Activated T-helper 1 cell treated with anti-CD3 and anti-CD28 coated beads, Interleukin-12 subunit alpha, Interleukin-12 subunit beta, Interleukin-2, Interleukin-4 antibody, amounts not matched to agents 30 ng/mL and 10 ng/mL and 1 ng/mL, durations not matched to agents 14 hours and 24 hours and 36 hours (primary cell): ENCODE measurements at regions of chr2 and their contacts with region 1.

Region 1: DNA sequence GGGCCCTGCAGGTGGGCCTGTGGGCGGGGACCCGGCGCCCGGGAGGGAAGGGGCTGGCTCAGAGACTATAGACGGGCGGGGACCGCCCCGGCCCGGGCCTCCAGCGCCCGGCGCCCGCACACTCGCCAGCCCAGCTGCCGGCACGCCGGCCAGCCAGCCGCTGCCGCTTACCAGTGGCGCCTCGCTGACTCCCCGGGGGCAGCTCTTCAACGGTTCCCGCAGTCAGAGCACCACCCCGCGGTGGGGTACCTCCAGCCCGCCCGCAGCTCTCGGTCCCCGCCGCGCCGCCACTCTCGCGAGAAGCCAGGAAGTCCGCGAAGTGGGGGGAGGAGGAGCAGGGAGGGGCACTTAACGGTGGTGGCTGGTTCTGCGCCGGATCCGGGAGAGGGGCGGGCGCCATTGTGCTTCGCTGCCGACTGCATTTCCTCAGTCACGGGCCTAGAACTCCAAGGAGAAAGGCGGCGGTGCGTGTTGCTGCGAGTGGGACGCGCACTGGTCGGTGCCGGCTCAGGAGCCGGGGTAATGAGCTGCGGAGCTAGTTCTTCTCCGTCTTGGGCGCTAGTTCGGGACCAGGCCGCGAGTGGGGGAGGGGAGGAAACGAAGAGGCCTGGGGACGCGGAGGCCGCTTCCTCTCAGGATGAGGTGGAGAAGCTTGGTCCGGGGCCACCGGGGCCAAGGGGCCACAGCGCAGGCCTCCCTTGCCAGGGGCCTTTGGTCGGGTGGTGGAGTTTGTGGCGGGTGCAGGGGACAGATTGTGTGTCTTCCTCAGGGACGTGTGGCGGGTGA is at the start of gene MARCHF7:
- DNase-seq: peak; percentile 96
- H3K4me3 Mint-ChIP-seq: peak within 1 kb of the TSS; percentile 98
- H3K27ac Mint-ChIP-seq: peak within 1 kb of the TSS; percentile 98
- H3K4me1 Mint-ChIP-seq: peaks cover 44% of the 10 kb centered on the region
- H3K27me3 Mint-ChIP-seq: no peaks in the 10 kb centered on the region
- total RNA-seq, gene MARCHF7: 76.5 and 80.3 TPM in 2 replicates

Region 2: DNA sequence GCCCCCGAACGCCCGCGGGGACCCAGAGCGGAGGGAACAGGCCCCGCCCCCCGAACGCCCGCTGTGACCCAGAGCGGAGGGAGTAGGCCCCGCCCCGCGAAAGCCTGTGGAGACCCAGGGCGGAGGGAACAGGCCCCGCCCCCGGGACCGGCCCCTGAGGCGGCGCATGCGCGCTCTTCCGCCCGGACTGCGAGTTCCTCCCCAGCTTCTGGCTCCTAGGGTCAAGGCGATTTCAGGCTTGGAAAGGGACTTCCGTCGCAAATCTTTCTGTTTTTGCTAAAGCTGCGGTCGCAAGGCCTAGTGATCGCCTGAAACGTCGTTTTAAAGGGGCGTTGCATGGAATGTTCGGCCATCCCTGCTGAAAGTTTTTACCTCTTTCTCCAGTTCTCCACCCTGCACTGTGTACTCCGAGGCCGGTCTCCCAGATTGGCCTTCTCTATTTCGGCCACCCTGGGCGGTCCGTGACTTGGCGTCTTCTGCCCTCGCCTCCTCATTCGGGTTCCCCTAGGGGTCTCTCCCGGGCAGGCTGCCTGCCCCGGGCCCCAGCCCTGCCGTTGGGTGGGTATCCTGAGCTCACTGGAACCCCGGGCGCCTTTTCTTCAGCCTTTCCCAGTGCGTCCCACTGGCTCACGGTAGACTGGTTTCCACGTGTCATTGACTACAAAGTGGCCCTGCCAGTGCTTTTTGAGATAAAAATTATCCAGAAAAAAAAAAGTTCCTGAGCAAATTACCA is 425.5 kb before region 1 on chr2:
- intact Hi-C with region 1: loop called (anchors 1 kb)
- DNase-seq: peak; percentile 95
- H3K4me3 Mint-ChIP-seq: peak overlapping the region; percentile 84
- H3K27ac Mint-ChIP-seq: peak overlapping the region; percentile 76
- H3K4me1 Mint-ChIP-seq: peaks cover 28% of the 10 kb centered on the region
- H3K27me3 Mint-ChIP-seq: no peaks in the 10 kb centered on the region

Region 3: DNA sequence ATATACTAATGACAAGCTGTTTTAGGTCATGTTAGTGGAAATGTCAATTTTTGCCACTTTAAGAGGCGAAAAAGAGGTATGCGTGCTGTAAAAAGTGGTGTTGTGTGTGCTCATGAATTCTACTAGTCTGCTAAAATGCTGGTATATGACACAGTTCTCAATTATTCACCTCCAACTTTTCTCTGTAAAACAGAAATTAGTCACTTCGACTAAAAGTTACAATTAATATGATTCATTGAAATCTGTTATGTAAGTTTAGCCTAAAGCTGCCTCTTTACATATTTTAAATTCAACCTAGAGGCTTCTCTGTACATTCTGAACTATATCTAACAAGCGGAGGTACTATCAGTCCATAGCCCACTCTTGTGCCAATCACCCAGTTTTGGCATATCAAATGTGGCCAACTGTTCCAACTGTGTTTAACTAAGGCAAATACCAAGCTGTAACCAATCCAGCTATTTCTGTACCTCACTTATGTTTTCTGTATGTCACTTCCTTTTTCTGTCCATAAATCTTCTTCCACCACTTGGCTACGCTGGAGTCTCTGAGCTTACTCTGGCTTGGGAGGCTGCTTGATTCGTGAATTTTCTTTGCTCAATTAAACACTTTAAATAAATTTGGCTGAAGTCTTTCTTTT is 116.8 kb before region 1 on chr2:
- intact Hi-C with region 1: no loop called
- DNase-seq: no peak
- H3K4me3 Mint-ChIP-seq: no peak overlapping the region
- H3K27ac Mint-ChIP-seq: no peak overlapping the region
- H3K4me1 Mint-ChIP-seq: no peaks in the 10 kb centered on the region
- H3K27me3 Mint-ChIP-seq: no peaks in the 10 kb centered on the region

Region 4: GRCh38 chr2:159615140-159615951 is 97.0 kb before region 1 on chr2:
- intact Hi-C with region 1: loop called (anchors 1 kb)
- DNase-seq: peak; percentile 2
- H3K4me3 Mint-ChIP-seq: peak overlapping the region; percentile 83
- H3K27ac Mint-ChIP-seq: peak overlapping the region; percentile 21
- H3K4me1 Mint-ChIP-seq: peaks cover 18% of the 10 kb centered on the region
- H3K27me3 Mint-ChIP-seq: peaks cover 32% of the 10 kb centered on the region

Region 5: GRCh38 chr2:159671047-159671446 is 41.3 kb before region 1 on chr2:
- intact Hi-C with region 1: no loop called
- DNase-seq: no peak
- H3K4me3 Mint-ChIP-seq: no peak overlapping the region
- H3K27ac Mint-ChIP-seq: no peak overlapping the region
- H3K4me1 Mint-ChIP-seq: no peaks in the 10 kb centered on the region
- H3K27me3 Mint-ChIP-seq: peaks cover 2% of the 10 kb centered on the region

Region 6: DNA sequence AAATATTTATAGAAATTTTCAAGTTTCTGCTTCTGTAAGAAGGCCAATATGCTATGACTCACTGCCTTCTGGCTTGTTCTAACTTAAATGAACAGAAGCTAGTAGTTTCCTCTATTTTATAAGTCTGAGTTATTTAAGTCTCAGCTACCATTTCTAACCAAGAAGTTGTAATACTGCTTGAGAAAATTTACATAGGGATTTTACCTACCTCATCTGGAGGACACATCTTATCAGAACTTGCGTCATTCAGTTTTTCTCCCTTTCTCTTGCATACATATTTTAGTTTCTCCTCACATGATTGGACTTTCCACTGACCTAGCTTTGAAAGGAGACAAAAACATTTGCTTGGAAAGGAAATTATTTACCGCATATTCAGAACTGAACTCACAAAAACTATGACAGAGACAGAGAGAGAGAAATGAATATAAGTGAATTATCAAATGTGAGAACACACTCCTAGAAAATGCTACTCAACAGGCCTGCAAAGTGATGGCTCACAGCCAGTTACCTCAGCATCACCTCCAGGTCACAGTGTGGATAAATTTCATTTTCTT is 166.8 kb after region 1 on chr2:
- intact Hi-C with region 1: loop called (anchors 5 kb)
- DNase-seq: no peak
- H3K4me3 Mint-ChIP-seq: no peak overlapping the region
- H3K27ac Mint-ChIP-seq: peak overlapping the region; percentile 86
- H3K4me1 Mint-ChIP-seq: peaks cover 32% of the 10 kb centered on the region
- H3K27me3 Mint-ChIP-seq: no peaks in the 10 kb centered on the region

Region 7: GRCh38 chr2:159921752-159922404 is 209.5 kb after region 1 on chr2:
- intact Hi-C with region 1: loop called (anchors 5 kb)
- DNase-seq: peak; percentile 52
- H3K4me3 Mint-ChIP-seq: no peak overlapping the region
- H3K27ac Mint-ChIP-seq: no peak overlapping the region
- H3K4me1 Mint-ChIP-seq: peaks cover 19% of the 10 kb centered on the region
- H3K27me3 Mint-ChIP-seq: peaks cover 3% of the 10 kb centered on the region

Region 8: GRCh38 chr2:161308178-161308955 is 1596.0 kb after region 1 on chr2 and contains the start of gene PSMD14:
- intact Hi-C with region 1: loop called (anchors 1 kb)
- DNase-seq: peak; percentile 90
- H3K4me3 Mint-ChIP-seq: peak within 1 kb of the TSS; percentile 91
- H3K27ac Mint-ChIP-seq: peak within 1 kb of the TSS; percentile 94
- H3K4me1 Mint-ChIP-seq: peaks cover 33% of the 10 kb centered on the region
- H3K27me3 Mint-ChIP-seq: peaks cover 5% of the 10 kb centered on the region
- total RNA-seq, gene PSMD14: 103 and 113 TPM in 2 replicates